Activated CD4-positive, alpha-beta T cell treated with anti-CD3 and anti-CD28 coated beads, Interleukin-2, amount 10 ng/mL, durations not matched to agents 24 days and 14 days (primary cell): ENCODE measurements at regions of chr16 and their contacts with region 1.

Region 1: DNA sequence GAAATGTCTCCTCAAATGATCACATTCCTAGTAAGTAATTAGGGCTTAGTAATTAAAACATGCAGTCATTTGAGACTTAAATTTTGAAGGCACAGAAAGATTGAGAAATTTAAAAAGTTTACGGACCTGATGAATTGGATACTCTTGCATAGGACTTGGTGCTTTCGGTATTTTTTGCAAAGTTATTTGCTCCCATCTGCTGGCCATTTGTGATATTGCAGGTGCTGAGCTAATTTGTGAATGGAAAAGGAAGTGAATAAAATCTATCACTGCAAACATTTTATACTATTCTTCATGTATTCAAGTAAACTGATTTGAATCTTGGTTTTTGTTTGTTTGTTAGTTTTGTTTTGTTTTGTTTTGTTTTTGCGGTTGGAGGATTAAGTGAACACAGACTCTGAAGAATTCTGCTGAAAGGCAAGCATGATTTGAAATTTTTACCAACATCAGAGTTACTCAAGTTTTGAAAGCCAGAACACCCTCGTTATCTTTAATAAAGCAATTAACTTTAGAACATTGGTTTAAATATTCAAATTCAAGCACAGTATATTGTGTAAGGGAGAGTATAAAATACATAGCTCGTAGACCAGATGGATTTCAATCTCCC is 689.5 kb upstream of the RBFOX1 start:
- DNase-seq: peak; percentile 85
- H3K4me3 Mint-ChIP-seq: no peak overlapping the region
- H3K27ac Mint-ChIP-seq: no peak overlapping the region
- H3K4me1 Mint-ChIP-seq: peaks cover 4% of the 10 kb centered on the region
- H3K27me3 Mint-ChIP-seq: peaks cover 6% of the 10 kb centered on the region

Region 2: GRCh38 chr16:5234295-5235050 is 1408.7 kb before region 1 on chr16:
- intact Hi-C with region 1: loop called (anchors 5 kb)
- DNase-seq: no peak
- H3K4me3 Mint-ChIP-seq: no peak overlapping the region
- H3K27ac Mint-ChIP-seq: no peak overlapping the region
- H3K4me1 Mint-ChIP-seq: peaks cover 2% of the 10 kb centered on the region
- H3K27me3 Mint-ChIP-seq: peaks cover 9% of the 10 kb centered on the region

Region 3: GRCh38 chr16:6682142-6682811 is 39.1 kb after region 1 on chr16:
- intact Hi-C with region 1: no loop called
- DNase-seq: peak; percentile 60
- H3K4me3 Mint-ChIP-seq: no peak overlapping the region
- H3K27ac Mint-ChIP-seq: no peak overlapping the region
- H3K4me1 Mint-ChIP-seq: no peaks in the 10 kb centered on the region
- H3K27me3 Mint-ChIP-seq: no peaks in the 10 kb centered on the region

Region 4: DNA sequence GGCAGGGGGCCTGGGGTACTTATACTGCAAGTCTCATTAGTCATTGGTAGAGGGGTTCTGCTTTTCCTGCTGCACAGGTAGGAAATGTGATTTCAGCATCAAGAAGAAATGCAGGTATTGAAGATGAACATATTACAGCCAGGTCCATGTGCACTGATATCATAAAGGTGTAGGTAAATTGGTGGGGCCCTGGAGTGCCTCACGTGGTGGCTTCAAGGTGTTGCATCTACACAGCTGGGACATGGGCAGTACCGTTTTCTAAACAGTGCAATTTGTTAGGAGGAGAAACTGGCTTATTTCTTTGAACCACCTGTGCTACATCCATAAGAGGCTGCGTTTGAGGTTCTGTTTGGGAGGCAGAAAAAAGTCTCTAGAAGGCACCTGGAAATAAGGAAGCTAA is 71.3 kb after region 1 on chr16:
- intact Hi-C with region 1: no loop called
- DNase-seq: no peak
- H3K4me3 Mint-ChIP-seq: no peak overlapping the region
- H3K27ac Mint-ChIP-seq: no peak overlapping the region
- H3K4me1 Mint-ChIP-seq: no peaks in the 10 kb centered on the region
- H3K27me3 Mint-ChIP-seq: no peaks in the 10 kb centered on the region

Region 5: GRCh38 chr16:8182761-8183160 is 1539.6 kb after region 1 on chr16:
- intact Hi-C with region 1: no loop called
- DNase-seq: no peak
- H3K4me3 Mint-ChIP-seq: no peak overlapping the region
- H3K27ac Mint-ChIP-seq: no peak overlapping the region
- H3K4me1 Mint-ChIP-seq: no peaks in the 10 kb centered on the region
- H3K27me3 Mint-ChIP-seq: no peaks in the 10 kb centered on the region